GM12878 (cell line): ENCODE measurements at regions of chr12 and their contacts with region 1.

Region 1: GRCh38 chr12:96578526-96579125 is 89.2 kb downstream of the CFAP54 start:
- DNase-seq: peak; percentile 57
- ATAC-seq: peak; percentile 99
- H3K4me3 ChIP-seq: no peak overlapping the region
- H3K27ac ChIP-seq: no peak overlapping the region
- H3K4me1 ChIP-seq: no peaks in the 10 kb centered on the region
- H3K27me3 ChIP-seq: no peaks in the 10 kb centered on the region
- CTCF ChIP-seq: peak; percentile 52 to 79 (median 57); a peak in 5 of 6 replicates
- EP300 ChIP-seq: no peak
- POLR2A ChIP-seq: no peak
- RAD21 ChIP-seq: peak; percentile 93

Region 2: DNA sequence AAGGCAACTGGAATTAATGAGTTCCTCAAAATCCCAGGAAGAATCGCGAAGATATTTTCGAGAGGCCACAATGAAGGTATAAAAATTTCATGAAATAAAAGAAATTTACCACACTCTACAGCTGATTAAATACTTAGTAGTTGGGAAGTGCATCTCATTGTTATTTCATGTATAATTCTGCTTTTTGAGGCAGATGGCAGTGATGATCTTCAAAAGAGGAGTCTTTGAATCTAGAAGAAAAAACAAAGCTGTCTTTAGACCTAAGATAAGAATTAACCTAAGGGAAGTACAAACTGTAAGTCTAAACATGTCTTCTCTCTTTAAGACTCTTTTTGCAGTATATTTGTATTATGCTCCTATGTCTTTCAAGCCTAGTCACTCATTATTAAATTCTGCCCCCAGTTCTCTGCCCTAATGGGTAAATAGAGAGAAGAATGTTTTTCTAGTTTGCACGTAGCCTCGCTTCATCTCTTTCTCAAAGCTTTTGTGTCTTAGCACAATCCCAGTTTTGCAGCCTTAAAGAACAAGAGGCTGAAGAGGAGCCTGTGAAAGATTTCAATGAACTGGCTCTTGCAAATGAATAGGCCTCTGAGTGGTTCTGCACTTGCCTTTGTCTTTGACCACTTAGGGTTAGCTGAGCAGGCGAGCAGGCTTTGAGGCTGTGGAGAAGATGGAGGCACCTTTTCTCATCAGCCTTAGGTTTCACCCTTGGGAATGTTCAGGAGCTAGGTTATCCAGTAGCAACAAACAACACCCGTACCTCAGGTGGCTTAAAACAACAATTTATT is 56.5 kb before region 1 on chr12:
- CTCF ChIA-PET with region 1: interaction called, 29 read pairs
- POLR2A ChIA-PET with region 1: no interaction called
- RAD21 ChIA-PET with region 1: interaction called, 16 read pairs
- SMC1A ChIA-PET with region 1: interaction called, 18 read pairs
- in situ Hi-C with region 1: no loop called
- intact Hi-C with region 1: no loop called
- DNase-seq: no peak
- ATAC-seq: peak; percentile 41; the same call in 2 of the 3 replicates
- H3K4me3 ChIP-seq: no peak overlapping the region
- H3K27ac ChIP-seq: no peak overlapping the region
- H3K4me1 ChIP-seq: peaks cover 5% of the 10 kb centered on the region
- H3K27me3 ChIP-seq: no peaks in the 10 kb centered on the region
- CTCF ChIP-seq: peak in 1 of 3 experiments; percentile 41; a peak in 1 of 6 replicates
- EP300 ChIP-seq: no peak
- POLR2A ChIP-seq: no peak
- RAD21 ChIP-seq: peak; percentile 47; the same call in 1 of the 2 replicates

Region 3: DNA sequence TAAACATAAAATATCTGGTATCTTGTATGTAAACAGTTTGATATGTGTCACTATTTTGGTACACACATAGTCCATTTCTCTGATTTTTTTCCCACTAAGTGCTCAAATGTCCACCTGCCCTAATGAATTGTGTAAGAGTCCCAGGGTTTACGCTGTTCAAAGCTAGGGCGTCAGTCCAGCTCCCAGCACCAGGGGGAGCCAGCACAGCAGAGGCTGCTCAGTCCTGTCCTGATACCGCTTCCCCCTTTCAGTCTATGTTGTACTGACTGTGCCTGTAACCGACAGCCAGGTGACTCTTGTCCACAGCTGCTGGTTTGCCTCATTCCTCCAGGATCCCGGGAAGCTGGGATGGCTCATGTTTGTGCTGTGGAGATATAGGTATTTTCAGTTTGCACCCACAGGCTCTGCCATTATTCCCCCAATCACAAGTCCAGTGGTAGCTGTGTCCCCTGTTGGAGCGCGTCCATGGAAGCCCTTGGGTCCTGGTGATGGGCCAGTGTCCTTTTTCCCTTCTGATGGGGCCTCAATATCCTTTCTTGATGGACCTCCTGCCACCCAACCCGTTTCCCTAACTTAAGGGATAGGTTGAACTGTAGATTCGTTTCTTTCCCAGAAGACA is 570.4 kb after region 1 on chr12:
- CTCF ChIA-PET with region 1: interaction called, 3 read pairs
- POLR2A ChIA-PET with region 1: no interaction called
- RAD21 ChIA-PET with region 1: no interaction called
- SMC1A ChIA-PET with region 1: interaction called, 3 read pairs
- in situ Hi-C with region 1: no loop called
- intact Hi-C with region 1: loop called (anchors 5 kb)
- DNase-seq: no peak
- ATAC-seq: peak; percentile 100
- H3K4me3 ChIP-seq: no peak overlapping the region
- H3K27ac ChIP-seq: no peak overlapping the region
- H3K4me1 ChIP-seq: no peaks in the 10 kb centered on the region
- H3K27me3 ChIP-seq: no peaks in the 10 kb centered on the region; a peak in 1 of 4 replicates
- CTCF ChIP-seq: peak; percentile 90 to 96 (median 90)
- EP300 ChIP-seq: no peak
- POLR2A ChIP-seq: no peak
- RAD21 ChIP-seq: peak; percentile 88

Region 4: GRCh38 chr12:97404543-97404942 is 825.9 kb after region 1 on chr12:
- CTCF ChIA-PET with region 1: interaction called, 13 read pairs
- POLR2A ChIA-PET with region 1: no interaction called
- RAD21 ChIA-PET with region 1: interaction called, 3 read pairs
- SMC1A ChIA-PET with region 1: interaction called, 4 read pairs
- in situ Hi-C with region 1: loop called (anchors 25 kb)
- intact Hi-C with region 1: loop called (anchors 5 kb)
- DNase-seq: peak; percentile 23
- ATAC-seq: peak; percentile 90
- H3K4me3 ChIP-seq: no peak overlapping the region
- H3K27ac ChIP-seq: no peak overlapping the region
- H3K4me1 ChIP-seq: peaks cover 7% of the 10 kb centered on the region; the same call in 1 of the 2 replicates
- H3K27me3 ChIP-seq: no peaks in the 10 kb centered on the region
- CTCF ChIP-seq: peak; percentile 76 to 84 (median 83)
- EP300 ChIP-seq: no peak
- POLR2A ChIP-seq: no peak
- RAD21 ChIP-seq: peak; percentile 96

Region 5: GRCh38 chr12:98397316-98398105 is 1818.9 kb after region 1 on chr12:
- CTCF ChIA-PET with region 1: interaction called, 3 read pairs
- POLR2A ChIA-PET with region 1: no interaction called
- RAD21 ChIA-PET with region 1: interaction called, 3 read pairs
- SMC1A ChIA-PET with region 1: interaction called, 5 read pairs
- in situ Hi-C with region 1: loop called (anchors 10 kb)
- intact Hi-C with region 1: loop called (anchors 5 kb)
- DNase-seq: peak; percentile 53
- ATAC-seq: peak; percentile 93
- H3K4me3 ChIP-seq: peak overlapping the region; percentile 63; the same call in 1 of the 2 replicates
- H3K27ac ChIP-seq: no peak overlapping the region
- H3K4me1 ChIP-seq: peaks cover 23% of the 10 kb centered on the region
- H3K27me3 ChIP-seq: no peaks in the 10 kb centered on the region
- CTCF ChIP-seq: peak; percentile 76 to 90 (median 87)
- EP300 ChIP-seq: 0 out of 4 replicates have a peak, but pooled peaks of 1 of the 2 experiments have one; percentile 13
- POLR2A ChIP-seq: no peak
- RAD21 ChIP-seq: peak; percentile 84